CD4-positive, alpha-beta memory T cell (primary cell): ENCODE measurements at regions of chrX and their contacts with region 1.

Region 1: DNA sequence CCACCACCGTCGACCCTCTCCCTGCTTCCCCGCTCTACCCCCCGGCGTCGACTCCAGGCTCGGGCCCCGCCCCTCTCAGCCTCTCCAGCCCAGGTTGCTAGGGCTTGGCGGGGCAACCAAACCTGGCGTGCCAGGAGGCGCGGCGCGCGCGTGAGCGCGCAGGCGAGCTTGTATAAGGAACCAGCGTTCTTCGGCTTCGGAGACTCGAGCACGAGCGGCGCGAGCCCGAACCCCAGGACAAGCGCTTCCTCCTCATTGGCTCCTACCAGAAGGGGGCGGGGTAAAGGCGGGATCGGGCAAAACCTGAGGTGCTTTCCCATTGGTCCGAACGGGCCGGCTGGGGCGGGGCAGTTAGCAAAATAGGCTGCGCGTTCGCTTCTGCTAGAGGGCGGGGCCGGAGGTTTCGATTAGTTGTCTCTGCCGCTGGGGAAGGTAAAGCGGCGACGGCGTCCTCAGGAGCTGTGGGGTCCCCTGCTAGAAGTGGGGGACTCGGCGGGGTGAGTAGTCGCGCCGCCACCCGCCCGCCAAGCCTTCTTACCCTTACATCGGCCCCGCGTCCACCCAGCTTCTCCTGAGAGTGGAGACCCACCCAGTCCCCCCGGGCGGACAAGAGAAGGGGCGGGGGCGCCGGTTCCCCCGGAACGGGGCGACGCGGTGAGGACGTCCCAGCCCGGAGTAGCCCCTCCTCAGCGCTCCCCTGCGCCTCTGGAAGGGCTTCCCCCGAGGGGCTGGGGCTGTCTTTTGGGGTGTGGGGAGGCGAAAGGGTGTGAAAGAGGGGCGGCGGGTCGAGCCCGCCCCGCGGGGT is at the start of gene CDKL5:
- DNase-seq: peak; percentile 93 to 98 (median 96)
- H3K4me3 ChIP-seq: peak within 1 kb of the TSS; percentile 17 to 66
- H3K4me3 Mint-ChIP-seq: peak within 1 kb of the TSS; percentile 86 to 99 (median 90)
- H3K27ac ChIP-seq: peak within 1 kb of the TSS; percentile 67
- H3K27ac Mint-ChIP-seq: peak within 1 kb of the TSS; percentile 80 to 91 (median 91)
- H3K4me1 ChIP-seq: peaks cover 15% of the 10 kb centered on the region
- H3K4me1 Mint-ChIP-seq: peaks cover 3 to 21% (median 9%) of the 10 kb centered on the region in 4 donors
- H3K27me3 ChIP-seq: no peaks in the 10 kb centered on the region
- H3K27me3 Mint-ChIP-seq: peaks cover 3% of the 10 kb centered on the region in 2 donors
- total RNA-seq, gene CDKL5: 5.0 to 5.7 TPM

Region 2: DNA sequence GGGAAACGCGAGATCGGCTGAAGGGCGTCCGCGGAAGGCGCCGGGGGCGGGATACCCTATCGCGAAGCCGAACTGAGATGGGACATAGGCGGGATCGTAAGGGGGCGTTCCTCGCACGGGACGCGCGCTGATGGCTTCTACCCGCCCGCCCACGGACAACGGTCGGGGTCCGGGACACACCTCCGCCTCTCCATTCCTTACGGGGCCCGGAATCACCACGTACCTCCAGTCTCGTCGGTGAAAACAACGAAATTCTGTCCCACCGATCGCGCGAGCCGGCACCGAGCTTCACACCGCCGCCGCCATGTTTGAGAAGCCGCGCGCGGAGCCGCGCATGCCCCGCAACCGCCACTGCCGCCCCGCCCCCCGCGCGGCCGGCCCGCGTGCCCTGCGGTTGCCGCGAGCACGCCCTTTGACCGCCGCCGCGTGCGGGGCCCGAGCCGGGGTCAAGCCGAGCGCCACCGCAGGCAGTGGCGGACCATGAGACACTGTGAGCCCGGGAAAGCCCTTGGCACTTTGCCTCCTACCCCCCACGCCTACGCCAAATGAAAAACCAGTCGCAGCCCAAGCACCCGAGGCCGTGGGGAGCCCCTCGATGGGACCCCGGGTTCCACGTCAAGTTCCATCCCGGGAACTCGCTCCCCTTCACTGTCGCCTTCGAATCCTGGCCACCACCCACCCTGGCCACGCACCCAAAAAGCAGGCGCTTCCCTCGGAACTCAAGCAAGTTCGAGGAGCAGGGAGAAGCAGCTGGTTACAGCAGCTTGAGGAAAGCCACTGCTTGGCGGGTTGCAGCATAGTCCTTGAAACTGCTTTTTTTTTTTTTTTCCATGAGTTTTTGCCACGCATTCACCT is 70.8 kb before region 1 on chrX and contains the start of gene SCML2:
- CTCF ChIA-PET with region 1: no interaction called
- POLR2A ChIA-PET with region 1: no interaction called
- intact Hi-C with region 1: loop called (anchors 2 kb)
- DNase-seq: peak; percentile 15 to 36 (median 23)
- H3K4me3 ChIP-seq: peak within 1 kb of the TSS in 1 of 2 donors; percentile 32
- H3K4me3 Mint-ChIP-seq: peak within 1 kb of the TSS; percentile 82 to 87 (median 84)
- H3K27ac ChIP-seq: no peak within 1 kb of the TSS
- H3K27ac Mint-ChIP-seq: peak within 1 kb of the TSS in 2 of 7 donors; percentile 37 to 57
- H3K4me1 ChIP-seq: peaks cover 4% of the 10 kb centered on the region
- H3K4me1 Mint-ChIP-seq: peaks cover 0 to 5% (median 2%) of the 10 kb centered on the region in 4 donors
- H3K27me3 ChIP-seq: no peaks in the 10 kb centered on the region
- H3K27me3 Mint-ChIP-seq: no peaks in the 10 kb centered on the region
- total RNA-seq, gene SCML2: 1.2 to 1.7 TPM

Region 3: DNA sequence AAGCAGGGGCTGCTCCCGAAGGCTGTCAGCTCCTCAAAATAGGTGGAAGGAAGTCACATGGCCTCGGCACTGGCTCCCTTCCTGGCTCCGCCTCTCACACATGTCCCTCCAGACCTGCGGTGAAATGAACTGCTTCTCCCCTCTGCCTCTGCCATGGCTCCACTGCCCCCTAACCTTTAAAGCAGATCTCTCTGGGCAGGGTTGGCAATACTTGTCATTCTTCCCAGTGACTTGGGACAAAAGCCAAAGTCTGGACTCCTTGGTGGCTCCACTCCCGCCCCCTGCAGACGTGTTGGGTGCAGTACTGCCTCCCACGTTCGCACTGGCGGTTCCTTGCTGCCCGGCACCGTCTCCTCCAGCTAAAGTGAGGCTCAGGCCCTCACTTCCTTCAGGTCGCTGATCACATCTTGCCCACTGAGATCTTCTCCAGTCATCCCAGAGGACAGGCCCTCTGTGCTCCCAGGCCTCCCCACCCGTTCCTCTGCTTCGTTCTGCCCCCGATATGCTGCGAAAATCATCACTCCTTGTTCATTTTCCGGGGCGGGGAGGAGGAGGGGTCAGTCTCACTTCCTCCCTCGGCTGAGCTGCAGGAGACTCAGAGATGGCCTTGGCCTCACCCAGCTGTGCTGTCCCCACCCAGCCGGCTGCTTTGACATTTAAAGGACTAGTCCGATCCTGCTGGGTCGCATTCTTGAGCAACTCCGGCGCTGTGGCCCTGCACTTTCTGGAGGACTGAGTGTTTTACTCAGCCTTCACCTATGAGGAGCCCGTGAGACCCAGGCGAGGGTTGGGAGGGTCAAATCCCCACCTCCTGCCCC is 461.2 kb after region 1 on chrX:
- CTCF ChIA-PET with region 1: no interaction called
- POLR2A ChIA-PET with region 1: interaction called, 11 read pairs
- intact Hi-C with region 1: loop called (anchors 2 kb)
- DNase-seq: peak; percentile 32 to 42 (median 42)
- H3K4me3 ChIP-seq: peak overlapping the region in 1 of 2 donors; percentile 56
- H3K4me3 Mint-ChIP-seq: peak overlapping the region; percentile 84 to 94 (median 90)
- H3K27ac ChIP-seq: peak overlapping the region; percentile 28
- H3K27ac Mint-ChIP-seq: peak overlapping the region; percentile 82 to 98 (median 92)
- H3K4me1 ChIP-seq: peaks cover 14% of the 10 kb centered on the region
- H3K4me1 Mint-ChIP-seq: peaks cover 12 to 32% (median 20%) of the 10 kb centered on the region in 4 donors
- H3K27me3 ChIP-seq: no peaks in the 10 kb centered on the region
- H3K27me3 Mint-ChIP-seq: no peaks in the 10 kb centered on the region

Region 4: DNA sequence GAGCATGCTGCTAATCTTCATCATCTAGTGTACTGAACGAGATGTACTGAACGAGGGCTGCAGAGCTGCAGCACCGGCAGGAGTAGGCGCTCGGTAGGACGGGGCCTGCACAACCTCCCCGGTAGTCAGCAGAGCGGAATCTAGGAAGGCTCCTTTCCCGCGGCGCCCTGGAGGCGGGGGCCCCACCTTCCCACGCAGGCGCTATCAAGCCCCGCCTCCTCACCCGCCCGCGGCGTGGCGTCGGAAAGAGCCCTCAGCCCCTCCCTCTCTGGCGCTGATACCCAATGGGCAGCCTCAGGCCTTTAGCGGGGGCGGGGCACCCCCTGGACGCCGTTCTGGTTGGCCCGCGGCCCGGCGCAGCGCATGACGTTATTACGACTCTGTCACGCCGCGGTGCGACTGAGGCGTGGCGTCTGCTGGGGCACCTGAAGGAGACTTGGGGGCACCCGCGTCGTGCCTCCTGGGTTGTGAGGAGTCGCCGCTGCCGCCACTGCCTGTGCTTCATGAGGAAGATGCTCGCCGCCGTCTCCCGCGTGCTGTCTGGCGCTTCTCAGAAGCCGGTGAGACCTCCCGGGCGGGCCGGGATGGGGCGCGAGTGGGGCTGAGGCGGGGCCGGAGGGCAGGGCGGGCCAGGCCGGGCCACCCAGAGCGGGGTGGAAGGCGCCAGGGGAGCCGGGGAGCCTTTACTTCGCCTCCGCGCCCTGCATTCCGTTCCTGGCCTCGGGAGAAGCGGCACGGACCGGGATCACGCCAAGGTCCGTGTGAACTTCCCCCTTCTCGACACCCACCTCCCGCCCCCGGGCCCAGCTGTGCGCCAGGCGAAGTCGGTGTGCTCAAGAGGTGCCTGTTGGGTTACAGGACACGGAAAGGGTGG is 918.4 kb after region 1 on chrX and contains the start of gene PDHA1:
- CTCF ChIA-PET with region 1: no interaction called
- POLR2A ChIA-PET with region 1: no interaction called
- intact Hi-C with region 1: loop called (anchors 1 kb)
- DNase-seq: peak; percentile 88 to 93 (median 92)
- H3K4me3 ChIP-seq: peak within 1 kb of the TSS; percentile 44 to 63
- H3K4me3 Mint-ChIP-seq: peak within 1 kb of the TSS; percentile 86 to 92 (median 88)
- H3K27ac ChIP-seq: peak within 1 kb of the TSS; percentile 83
- H3K27ac Mint-ChIP-seq: peak within 1 kb of the TSS; percentile 84 to 94 (median 92)
- H3K4me1 ChIP-seq: peaks cover 19% of the 10 kb centered on the region
- H3K4me1 Mint-ChIP-seq: peaks cover 8 to 21% (median 12%) of the 10 kb centered on the region in 4 donors
- H3K27me3 ChIP-seq: no peaks in the 10 kb centered on the region
- H3K27me3 Mint-ChIP-seq: no peaks in the 10 kb centered on the region
- total RNA-seq, gene PDHA1: 116 to 124 TPM